ENCODE measurements at regions of chr2 and their contacts with region 1.

Region 1: DNA sequence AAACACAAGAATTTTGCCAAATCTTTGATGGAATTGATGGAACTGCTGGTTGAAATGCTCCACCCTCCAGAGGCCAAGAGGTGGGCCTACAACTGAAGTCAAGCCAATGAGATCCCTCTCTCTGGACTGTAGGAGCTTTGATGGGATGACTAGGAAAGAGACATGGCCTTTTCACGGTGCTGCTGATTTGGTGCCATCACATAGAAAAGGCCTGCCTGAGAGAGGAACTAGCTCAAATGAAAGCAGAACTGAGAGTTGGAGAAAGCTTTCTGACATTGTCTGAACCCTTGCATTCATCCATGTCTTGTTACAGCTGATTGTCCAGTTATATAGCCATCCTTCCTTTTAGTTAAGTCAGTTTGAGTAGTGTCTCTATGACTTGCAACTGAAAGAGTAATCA is 283.8 kb upstream of the LYPD1 start:
- DNase-seq: peak; percentile 33
- ATAC-seq: peak; percentile 89
- H3K4me3 ChIP-seq: no peak overlapping the region
- H3K27ac ChIP-seq: no peak overlapping the region
- H3K4me1 ChIP-seq: no peaks in the 10 kb centered on the region
- H3K27me3 ChIP-seq: no peaks in the 10 kb centered on the region
- CTCF ChIP-seq: no peak
- EP300 ChIP-seq: peak in 1 of 2 experiments; percentile 81; a peak in 1 of 4 replicates
- POLR2A ChIP-seq: no peak
- RAD21 ChIP-seq: no peak

Region 2: GRCh38 chr2:132936791-132937190 is 17.0 kb before region 1 on chr2:
- CTCF ChIA-PET with region 1: interaction called, 5 read pairs
- POLR2A ChIA-PET with region 1: interaction called, 5 read pairs
- RAD21 ChIA-PET with region 1: interaction called, 3 read pairs
- SMC1A ChIA-PET with region 1: interaction called, 24 read pairs
- in situ Hi-C with region 1: no loop called
- intact Hi-C with region 1: no loop called
- DNase-seq: peak; percentile 40
- ATAC-seq: peak; percentile 99
- H3K4me3 ChIP-seq: no peak overlapping the region
- H3K27ac ChIP-seq: no peak overlapping the region
- H3K4me1 ChIP-seq: no peaks in the 10 kb centered on the region
- H3K27me3 ChIP-seq: no peaks in the 10 kb centered on the region
- CTCF ChIP-seq: no peak
- EP300 ChIP-seq: peak in 1 of 2 experiments; percentile 73; a peak in 1 of 4 replicates
- POLR2A ChIP-seq: no peak
- RAD21 ChIP-seq: no peak

Region 3: GRCh38 chr2:132969371-132969985 is 15.7 kb after region 1 on chr2:
- CTCF ChIA-PET with region 1: interaction called, 7 read pairs
- POLR2A ChIA-PET with region 1: interaction called, 5 read pairs
- RAD21 ChIA-PET with region 1: interaction called, 6 read pairs
- SMC1A ChIA-PET with region 1: interaction called, 211 read pairs
- in situ Hi-C with region 1: no loop called
- intact Hi-C with region 1: no loop called
- DNase-seq: no peak
- ATAC-seq: peak; percentile 87
- H3K4me3 ChIP-seq: no peak overlapping the region
- H3K27ac ChIP-seq: no peak overlapping the region
- H3K4me1 ChIP-seq: no peaks in the 10 kb centered on the region
- H3K27me3 ChIP-seq: no peaks in the 10 kb centered on the region
- CTCF ChIP-seq: no peak
- EP300 ChIP-seq: no peak
- POLR2A ChIP-seq: no peak
- RAD21 ChIP-seq: no peak

Measured in GM12878 (cell line).